ENCODE measurements at regions of chr5 and their contacts with region 1.

Region 1: DNA sequence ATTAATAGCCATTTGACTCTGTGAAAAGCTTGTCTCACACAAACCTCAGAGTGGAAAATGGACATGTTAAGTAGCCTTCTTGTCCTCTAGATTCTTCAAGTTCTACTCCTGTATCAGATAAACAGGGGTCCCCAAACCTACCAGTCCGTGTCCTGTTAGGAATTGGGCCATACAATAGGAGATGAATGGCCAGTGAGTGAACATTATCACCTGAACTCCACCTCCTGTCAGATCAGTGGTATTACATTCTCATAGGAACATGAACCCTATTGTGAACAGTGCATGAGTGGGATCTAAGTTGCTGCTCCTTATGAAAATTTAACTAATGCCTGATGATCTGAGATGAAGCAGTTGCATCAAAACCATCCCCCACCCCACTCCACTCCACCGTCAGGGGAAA is 136.3 kb downstream of the TMEM232 start:
- DNase-seq: peak; percentile 5
- H3K4me3 ChIP-seq: no peak overlapping the region
- H3K27ac ChIP-seq: no peak overlapping the region
- H3K4me1 ChIP-seq: no peaks in the 10 kb centered on the region
- H3K27me3 ChIP-seq: peaks cover 4% of the 10 kb centered on the region
- CTCF ChIP-seq: peak; percentile 56 to 58

Region 2: GRCh38 chr5:110441035-110441434 is 149.2 kb before region 1 on chr5:
- CTCF ChIA-PET with region 1: no interaction called
- dilution Hi-C with region 1: no loop called
- in situ Hi-C with region 1: no loop called
- intact Hi-C with region 1: loop called (anchors 1 kb)
- DNase-seq: peak; percentile 13
- H3K4me3 ChIP-seq: no peak overlapping the region
- H3K27ac ChIP-seq: no peak overlapping the region
- H3K4me1 ChIP-seq: no peaks in the 10 kb centered on the region
- H3K27me3 ChIP-seq: no peaks in the 10 kb centered on the region
- CTCF ChIP-seq: peak; percentile 49 to 54

Region 3: GRCh38 chr5:110492446-110492845 is 97.7 kb before region 1 on chr5:
- CTCF ChIA-PET with region 1: no interaction called
- dilution Hi-C with region 1: no loop called
- in situ Hi-C with region 1: no loop called
- intact Hi-C with region 1: no loop called
- DNase-seq: no peak
- H3K4me3 ChIP-seq: no peak overlapping the region
- H3K27ac ChIP-seq: no peak overlapping the region
- H3K4me1 ChIP-seq: no peaks in the 10 kb centered on the region
- H3K27me3 ChIP-seq: no peaks in the 10 kb centered on the region
- CTCF ChIP-seq: no peak

Region 4: GRCh38 chr5:111439473-111440075 is 849.4 kb after region 1 on chr5:
- CTCF ChIA-PET with region 1: no interaction called
- dilution Hi-C with region 1: no loop called
- in situ Hi-C with region 1: no loop called
- intact Hi-C with region 1: no loop called
- DNase-seq: peak; percentile 28
- H3K4me3 ChIP-seq: no peak overlapping the region
- H3K27ac ChIP-seq: no peak overlapping the region
- H3K4me1 ChIP-seq: peaks cover 13% of the 10 kb centered on the region
- H3K27me3 ChIP-seq: no peaks in the 10 kb centered on the region
- CTCF ChIP-seq: no peak

Measured in mammary epithelial cell (primary cell).